PC-9 (cell line): ENCODE measurements at regions of chr12 and their contacts with region 1.

Region 1: GRCh38 chr12:89862511-89863179 is 154.0 kb upstream of the ATP2B1 start:
- DNase-seq: no peak
- H3K4me3 ChIP-seq: no peak overlapping the region
- H3K27ac ChIP-seq: no peak overlapping the region
- H3K4me1 ChIP-seq: no peaks in the 10 kb centered on the region
- H3K27me3 ChIP-seq: no peaks in the 10 kb centered on the region
- CTCF ChIP-seq: no peak

Region 2: DNA sequence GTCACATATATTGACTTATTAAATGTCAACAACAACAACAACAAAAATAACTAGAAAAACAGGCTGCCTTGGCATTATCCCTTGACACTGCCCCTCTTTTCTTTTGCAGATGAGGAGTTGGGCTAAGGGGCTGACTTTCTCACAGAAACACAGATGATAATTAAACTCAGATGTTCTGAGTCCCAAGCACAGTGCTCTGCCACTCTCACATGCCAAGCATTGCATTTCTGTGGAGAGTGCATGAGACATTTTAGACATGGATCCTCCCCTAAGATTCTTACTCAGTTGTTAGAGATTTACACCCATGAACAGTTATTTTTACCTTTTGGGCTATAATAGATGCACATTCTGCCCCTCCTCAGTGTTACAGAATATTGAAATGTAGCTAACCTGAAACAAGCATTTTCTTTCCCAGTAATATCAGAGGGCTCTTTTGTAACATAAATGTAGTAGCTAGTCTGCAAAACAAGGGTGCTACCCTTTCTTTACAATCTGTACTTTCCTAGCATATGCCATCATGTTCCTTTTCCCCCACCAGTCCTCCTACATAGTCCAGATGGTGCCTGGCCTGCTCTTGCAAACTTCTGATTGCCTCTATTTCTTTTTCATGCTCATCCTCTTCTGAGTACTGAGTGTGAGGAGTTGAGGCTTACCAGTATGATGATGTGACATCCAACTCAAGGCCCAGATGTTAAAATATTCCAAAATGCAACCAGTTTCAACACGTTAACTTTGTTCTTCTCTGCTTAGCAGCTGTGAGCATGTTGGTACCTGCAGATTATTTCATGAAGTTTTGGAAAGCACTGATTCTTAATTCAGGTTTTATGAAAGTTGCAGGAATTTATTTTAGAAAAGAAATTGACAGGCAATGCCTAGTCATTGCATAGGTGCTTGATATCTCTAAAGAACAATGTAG is 29.1 kb before region 1 on chr12:
- CTCF ChIA-PET with region 1: no interaction called
- POLR2A ChIA-PET with region 1: no interaction called
- intact Hi-C with region 1: loop called (anchors 1 kb)
- DNase-seq: no peak
- H3K4me3 ChIP-seq: no peak overlapping the region
- H3K27ac ChIP-seq: no peak overlapping the region
- H3K4me1 ChIP-seq: no peaks in the 10 kb centered on the region
- H3K27me3 ChIP-seq: no peaks in the 10 kb centered on the region
- CTCF ChIP-seq: no peak